ENCODE measurements at regions of chr17 and their contacts with region 1.

Region 1: GRCh38 chr17:78933959-78934568 is 8.9 kb upstream of the TIMP2 start:
- DNase-seq: peak; percentile 96 to 98
- ATAC-seq: peak; percentile 89 to 95 (median 90)
- H3K4me3 ChIP-seq: peak overlapping the region; percentile 33
- H3K27ac ChIP-seq: peak overlapping the region; percentile 86
- H3K4me1 ChIP-seq: peaks cover 35% of the 10 kb centered on the region
- H3K27me3 ChIP-seq: no peaks in the 10 kb centered on the region
- CTCF ChIP-seq: no peak

Region 2: DNA sequence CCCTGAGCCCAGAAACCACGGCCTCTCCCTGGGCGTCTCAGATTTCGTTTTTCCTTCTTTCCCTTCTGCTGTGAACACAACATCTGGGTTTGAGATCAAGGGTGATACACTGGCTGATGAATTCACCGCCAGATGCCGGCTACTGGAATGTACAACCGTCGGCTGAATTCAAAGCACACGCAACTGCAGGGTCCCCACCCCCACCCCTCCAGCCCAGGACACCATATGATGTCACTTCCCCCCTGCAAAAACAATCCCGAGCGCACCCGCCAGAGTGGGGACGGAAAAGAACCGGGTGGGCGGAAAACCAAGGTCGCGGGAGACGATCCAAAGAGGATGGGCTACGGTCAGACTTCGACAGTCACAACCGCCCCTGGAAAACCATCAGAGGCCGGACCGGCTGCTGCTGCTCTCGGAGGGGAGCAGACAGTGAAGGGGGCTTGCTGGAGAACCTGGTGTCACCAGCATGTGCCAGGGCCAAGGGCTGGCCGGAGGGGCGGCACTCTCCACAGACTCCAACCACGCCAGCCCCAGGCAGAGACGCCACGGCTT is 54.4 kb before region 1 on chr17:
- intact Hi-C with region 1: loop called in 1 of 2 experiments (anchors 5 kb)
- DNase-seq: peak; percentile 86
- ATAC-seq: peak; percentile 17 to 41 (median 30)
- H3K4me3 ChIP-seq: peak overlapping the region; percentile 31
- H3K27ac ChIP-seq: peak overlapping the region; percentile 77
- H3K4me1 ChIP-seq: peaks cover 48% of the 10 kb centered on the region
- H3K27me3 ChIP-seq: peaks cover 0 to 8% (median 0%) of the 10 kb centered on the region in 3 donors
- CTCF ChIP-seq: no peak

Measured in psoas muscle (tissue), 8 donors.